Left ventricle myocardium superior (tissue), 1 donor: ENCODE measurements at regions of chr4 and their contacts with region 1.

Region 1: DNA sequence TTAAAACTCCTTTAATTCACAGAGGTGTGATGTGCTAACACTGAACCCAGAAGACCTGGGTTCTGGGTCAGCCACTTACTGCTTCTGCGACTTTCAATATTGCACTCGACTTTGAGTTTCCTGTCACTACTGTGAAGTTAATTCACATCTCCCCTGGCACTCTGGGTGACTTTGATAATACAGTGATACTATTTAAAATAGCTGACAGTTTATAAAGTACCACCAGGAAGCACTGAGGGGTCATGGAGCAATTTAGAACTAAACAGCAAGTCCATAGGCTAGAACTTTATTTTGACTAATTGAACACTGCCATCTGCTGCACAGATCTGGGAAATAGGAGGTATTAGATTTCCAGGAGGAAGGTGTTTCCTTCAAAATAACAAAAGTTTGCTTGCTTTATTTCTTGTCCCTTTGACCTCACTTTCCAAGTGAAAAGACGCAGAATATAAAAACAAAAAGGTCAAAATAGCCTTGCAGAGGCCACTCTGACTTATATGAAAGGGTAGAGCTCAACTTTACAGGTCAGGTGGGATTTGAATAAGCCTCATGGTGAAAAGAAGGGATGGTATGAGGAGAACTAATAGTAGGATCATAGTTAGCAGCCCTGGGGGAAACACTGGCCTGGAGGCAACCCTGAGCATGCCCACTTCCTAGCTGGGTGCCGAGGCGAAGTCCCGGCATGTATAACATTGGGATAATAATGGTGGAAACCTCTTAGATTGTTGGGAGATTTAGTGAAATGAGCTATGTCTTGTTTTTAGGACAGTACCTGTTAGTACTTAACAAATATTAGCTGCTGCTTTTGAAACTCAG is 53.4 kb downstream of the ZNF518B start:
- DNase-seq: no peak
- ATAC-seq: peak; percentile 57

Region 2: GRCh38 chr4:10164877-10165283 is 239.0 kb before region 1 on chr4:
- intact Hi-C with region 1: loop called (anchors 5 kb)
- DNase-seq: peak; percentile 44
- ATAC-seq: peak; percentile 42

Region 3: DNA sequence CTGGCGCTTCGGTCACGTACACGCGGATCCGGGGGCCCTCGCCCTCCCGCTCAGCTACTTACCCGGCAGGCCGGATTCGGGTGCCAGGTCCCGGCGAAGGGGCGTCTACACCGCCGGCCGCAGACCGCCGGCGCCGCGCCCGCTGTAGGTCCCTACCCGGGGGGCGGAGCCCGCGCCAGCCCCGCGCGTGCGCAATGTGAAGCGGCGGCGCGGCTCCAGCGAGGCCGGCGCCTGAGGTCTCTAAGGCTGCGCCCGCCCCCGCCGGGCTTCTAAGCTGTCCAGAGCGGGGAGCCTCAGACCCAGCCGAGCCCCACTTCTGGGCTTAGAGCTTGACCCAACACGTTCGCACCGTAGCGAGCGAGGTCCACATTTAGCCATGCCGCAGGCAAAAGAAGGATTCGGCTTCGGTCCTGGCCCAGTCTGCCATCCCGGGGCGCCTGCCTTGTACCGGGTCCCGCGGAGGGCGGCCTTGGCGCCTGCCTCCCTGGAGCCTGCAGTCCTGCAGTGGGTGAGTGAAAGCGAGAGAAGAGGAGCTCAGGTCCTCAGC is 53.5 kb after region 1 on chr4 and contains the start of gene ZNF518B:
- intact Hi-C with region 1: no loop called
- DNase-seq: peak; percentile 87
- ATAC-seq: peak; percentile 92
- total RNA-seq, gene ZNF518B: 21.8 TPM